CD4-positive, alpha-beta memory T cell (primary cell): ENCODE measurements at regions of chr13 and their contacts with region 1.

Region 1: GRCh38 chr13:95191821-95192563 is 109.3 kb downstream of the ABCC4 start:
- DNase-seq: peak in 4 of 5 donors; percentile 22 to 38 (median 35)
- H3K4me3 ChIP-seq: no peak overlapping the region
- H3K4me3 Mint-ChIP-seq: no peak overlapping the region
- H3K27ac ChIP-seq: no peak overlapping the region
- H3K27ac Mint-ChIP-seq: peak overlapping the region in 1 of 7 donors; percentile 55
- H3K4me1 ChIP-seq: peaks cover under 1% of the 10 kb centered on the region
- H3K4me1 Mint-ChIP-seq: peaks cover 7 to 19% (median 16%) of the 10 kb centered on the region in 4 donors
- H3K27me3 ChIP-seq: no peaks in the 10 kb centered on the region
- H3K27me3 Mint-ChIP-seq: no peaks in the 10 kb centered on the region

Region 2: DNA sequence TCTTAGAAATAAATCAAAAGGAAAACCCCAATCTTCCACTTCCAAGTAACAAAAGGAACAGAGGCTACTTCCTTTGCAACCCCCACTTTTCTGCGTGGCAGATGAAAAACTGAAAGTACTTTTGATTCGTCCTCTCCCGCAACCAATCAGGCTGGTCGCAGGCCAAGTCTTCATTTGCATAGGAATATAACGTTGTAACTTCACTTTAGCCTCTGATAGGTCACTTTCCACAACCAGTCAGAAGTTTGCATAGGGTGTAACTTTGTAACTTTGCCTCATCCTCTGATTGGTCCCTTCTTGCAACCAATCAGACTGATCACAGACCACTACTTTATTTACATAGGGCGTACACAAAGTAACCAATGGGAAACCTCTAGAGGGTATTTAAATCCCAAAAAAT is 633.3 kb before region 1 on chr13:
- CTCF ChIA-PET with region 1: no interaction called
- POLR2A ChIA-PET with region 1: no interaction called
- intact Hi-C with region 1: no loop called
- DNase-seq: peak in 4 of 5 donors; percentile 13 to 38 (median 22)
- H3K4me3 ChIP-seq: no peak overlapping the region
- H3K4me3 Mint-ChIP-seq: peak overlapping the region in 4 of 8 donors; percentile 5 to 57 (median 26)
- H3K27ac ChIP-seq: no peak overlapping the region
- H3K27ac Mint-ChIP-seq: peak overlapping the region in 5 of 7 donors; percentile 19 to 86 (median 66)
- H3K4me1 ChIP-seq: peaks cover 12% of the 10 kb centered on the region
- H3K4me1 Mint-ChIP-seq: peaks cover 14 to 20% (median 18%) of the 10 kb centered on the region in 4 donors
- H3K27me3 ChIP-seq: no peaks in the 10 kb centered on the region
- H3K27me3 Mint-ChIP-seq: no peaks in the 10 kb centered on the region

Region 3: GRCh38 chr13:95156208-95156607 is 35.8 kb before region 1 on chr13:
- CTCF ChIA-PET with region 1: interaction called, 11 read pairs
- POLR2A ChIA-PET with region 1: no interaction called
- intact Hi-C with region 1: no loop called
- DNase-seq: no peak
- H3K4me3 ChIP-seq: no peak overlapping the region
- H3K4me3 Mint-ChIP-seq: no peak overlapping the region
- H3K27ac ChIP-seq: no peak overlapping the region
- H3K27ac Mint-ChIP-seq: no peak overlapping the region
- H3K4me1 ChIP-seq: no peaks in the 10 kb centered on the region
- H3K4me1 Mint-ChIP-seq: peaks cover 0 to 4% (median 1%) of the 10 kb centered on the region in 4 donors
- H3K27me3 ChIP-seq: no peaks in the 10 kb centered on the region
- H3K27me3 Mint-ChIP-seq: no peaks in the 10 kb centered on the region

Region 4: DNA sequence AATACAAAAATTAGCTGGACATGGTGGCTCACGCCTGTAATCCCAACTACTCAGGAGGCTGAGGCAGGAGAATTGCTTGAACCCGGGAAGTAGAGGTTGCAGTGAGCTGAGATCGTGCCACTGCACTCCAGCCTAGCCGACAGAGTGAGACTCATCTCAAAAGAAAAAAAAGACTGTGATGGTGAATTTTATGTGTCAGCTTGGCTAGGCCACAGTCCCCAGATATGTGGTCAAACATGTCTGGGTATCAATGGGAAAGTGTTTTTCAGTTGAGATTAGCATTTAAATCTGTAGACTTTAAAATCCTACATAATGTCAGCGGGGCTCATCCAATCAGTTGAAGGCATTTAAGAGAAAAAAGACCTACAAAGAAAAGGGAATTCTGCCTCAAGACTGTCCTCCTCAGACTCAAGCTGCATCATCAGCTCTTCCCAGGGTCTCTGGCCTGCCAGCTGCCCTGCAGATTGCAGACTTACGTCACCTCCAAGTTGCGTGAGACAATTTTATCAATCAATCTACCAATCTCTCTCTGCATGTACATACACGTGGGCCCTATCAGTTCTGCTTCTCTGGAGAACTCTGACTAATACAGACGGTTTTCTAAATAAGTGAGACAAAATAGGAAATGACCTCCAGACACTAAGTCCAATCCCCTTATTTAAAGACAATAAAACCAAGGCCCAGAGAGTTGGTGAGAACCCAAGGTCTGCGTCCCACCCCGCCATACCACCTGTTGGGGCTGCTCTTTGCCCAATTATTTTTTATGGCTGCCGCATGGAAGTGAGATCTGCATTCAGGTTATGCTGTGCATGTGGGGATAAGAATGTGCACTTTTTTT is 10.0 kb after region 1 on chr13:
- CTCF ChIA-PET with region 1: interaction called, 15 read pairs
- POLR2A ChIA-PET with region 1: no interaction called
- intact Hi-C with region 1: no loop called
- DNase-seq: no peak
- H3K4me3 ChIP-seq: no peak overlapping the region
- H3K4me3 Mint-ChIP-seq: no peak overlapping the region
- H3K27ac ChIP-seq: no peak overlapping the region
- H3K27ac Mint-ChIP-seq: no peak overlapping the region
- H3K4me1 ChIP-seq: no peaks in the 10 kb centered on the region
- H3K4me1 Mint-ChIP-seq: peaks cover 0 to 3% (median 0%) of the 10 kb centered on the region in 4 donors
- H3K27me3 ChIP-seq: no peaks in the 10 kb centered on the region
- H3K27me3 Mint-ChIP-seq: no peaks in the 10 kb centered on the region

Region 5: GRCh38 chr13:95301183-95301967 is 109.4 kb after region 1 on chr13 and contains the start of gene ABCC4:
- CTCF ChIA-PET with region 1: interaction called, 63 read pairs
- POLR2A ChIA-PET with region 1: no interaction called
- intact Hi-C with region 1: loop called (anchors 1 kb)
- DNase-seq: peak; percentile 37 to 58 (median 50)
- H3K4me3 ChIP-seq: peak within 1 kb of the TSS; percentile 65 to 70
- H3K4me3 Mint-ChIP-seq: peak within 1 kb of the TSS; percentile 82 to 93 (median 88)
- H3K27ac ChIP-seq: peak within 1 kb of the TSS; percentile 43
- H3K27ac Mint-ChIP-seq: peak within 1 kb of the TSS; percentile 36 to 95 (median 54)
- H3K4me1 ChIP-seq: peaks cover 14% of the 10 kb centered on the region
- H3K4me1 Mint-ChIP-seq: peaks cover 22 to 40% (median 30%) of the 10 kb centered on the region in 4 donors
- H3K27me3 ChIP-seq: no peaks in the 10 kb centered on the region
- H3K27me3 Mint-ChIP-seq: peaks cover 0 to 2% of the 10 kb centered on the region in 2 donors
- total RNA-seq, gene ABCC4: 7.9 to 10.0 TPM

Region 6: GRCh38 chr13:95403828-95404522 is 212.0 kb after region 1 on chr13:
- CTCF ChIA-PET with region 1: interaction called, 168 read pairs
- POLR2A ChIA-PET with region 1: interaction called, 5 read pairs
- intact Hi-C with region 1: loop called (anchors 1 kb)
- DNase-seq: peak; percentile 68 to 75 (median 71)
- H3K4me3 ChIP-seq: peak overlapping the region; percentile 56 to 58
- H3K4me3 Mint-ChIP-seq: peak overlapping the region; percentile 90 to 97 (median 93)
- H3K27ac ChIP-seq: no peak overlapping the region
- H3K27ac Mint-ChIP-seq: peak overlapping the region in 4 of 7 donors; percentile 76 to 92 (median 83)
- H3K4me1 ChIP-seq: peaks cover 5% of the 10 kb centered on the region
- H3K4me1 Mint-ChIP-seq: peaks cover 7 to 11% (median 8%) of the 10 kb centered on the region in 4 donors
- H3K27me3 ChIP-seq: no peaks in the 10 kb centered on the region
- H3K27me3 Mint-ChIP-seq: peaks cover 2 to 11% of the 10 kb centered on the region in 2 donors

Region 7: GRCh38 chr13:95480131-95480545 is 288.1 kb after region 1 on chr13:
- CTCF ChIA-PET with region 1: interaction called, 12 read pairs
- POLR2A ChIA-PET with region 1: no interaction called
- intact Hi-C with region 1: loop called (anchors 1 kb)
- DNase-seq: no peak
- H3K4me3 ChIP-seq: no peak overlapping the region
- H3K4me3 Mint-ChIP-seq: peak overlapping the region in 1 of 8 donors; percentile 35
- H3K27ac ChIP-seq: no peak overlapping the region
- H3K27ac Mint-ChIP-seq: no peak overlapping the region
- H3K4me1 ChIP-seq: no peaks in the 10 kb centered on the region
- H3K4me1 Mint-ChIP-seq: peaks cover 4 to 8% (median 8%) of the 10 kb centered on the region in 4 donors
- H3K27me3 ChIP-seq: no peaks in the 10 kb centered on the region
- H3K27me3 Mint-ChIP-seq: peaks cover 0 to 1% of the 10 kb centered on the region in 2 donors